ENCODE measurements at regions of chr22 and their contacts with region 1.

Region 1: DNA sequence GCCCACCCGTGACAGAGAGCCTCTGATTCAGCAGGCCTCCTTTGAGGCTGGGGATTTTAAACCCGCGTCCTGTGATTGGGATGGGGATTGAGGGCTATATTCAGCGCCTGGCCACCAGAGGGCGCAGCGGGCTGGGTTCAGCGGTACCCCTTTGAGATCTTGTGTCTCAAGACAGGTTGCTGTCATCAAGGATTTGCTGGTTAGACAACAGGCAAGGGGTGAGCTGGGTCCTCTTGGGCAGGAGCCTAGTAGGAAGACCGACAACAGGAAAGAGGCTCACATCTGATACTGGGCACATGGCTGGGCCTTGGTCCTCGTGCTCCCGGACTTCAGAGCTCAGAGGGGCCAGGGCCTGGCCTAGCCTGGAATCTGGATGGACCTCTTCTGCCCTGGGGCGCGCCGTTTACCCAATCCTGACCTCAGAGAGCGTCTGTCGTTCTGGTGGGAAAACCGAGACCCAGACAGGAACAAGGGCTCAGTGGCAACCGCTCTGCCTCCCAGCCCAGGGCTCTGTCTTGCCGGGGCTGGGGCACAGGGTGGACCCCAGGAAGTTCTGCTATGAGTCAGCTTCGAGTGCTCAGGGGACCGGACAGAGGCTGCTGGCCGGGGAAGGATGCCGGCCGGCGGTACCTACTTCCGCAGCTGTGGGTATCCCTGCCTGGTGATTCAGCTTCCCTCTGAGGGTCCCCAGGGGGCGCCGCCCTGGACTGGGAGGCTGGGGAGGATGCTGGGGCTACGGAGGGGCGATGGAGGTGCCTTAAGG is 929 bp upstream of the SLC35E4 start:
- DNase-seq: peak; percentile 97
- H3K4me3 Mint-ChIP-seq: peak overlapping the region; percentile 79
- H3K27ac Mint-ChIP-seq: peak overlapping the region; percentile 94
- H3K4me1 Mint-ChIP-seq: peaks cover 27% of the 10 kb centered on the region
- H3K27me3 Mint-ChIP-seq: no peaks in the 10 kb centered on the region

Region 2: DNA sequence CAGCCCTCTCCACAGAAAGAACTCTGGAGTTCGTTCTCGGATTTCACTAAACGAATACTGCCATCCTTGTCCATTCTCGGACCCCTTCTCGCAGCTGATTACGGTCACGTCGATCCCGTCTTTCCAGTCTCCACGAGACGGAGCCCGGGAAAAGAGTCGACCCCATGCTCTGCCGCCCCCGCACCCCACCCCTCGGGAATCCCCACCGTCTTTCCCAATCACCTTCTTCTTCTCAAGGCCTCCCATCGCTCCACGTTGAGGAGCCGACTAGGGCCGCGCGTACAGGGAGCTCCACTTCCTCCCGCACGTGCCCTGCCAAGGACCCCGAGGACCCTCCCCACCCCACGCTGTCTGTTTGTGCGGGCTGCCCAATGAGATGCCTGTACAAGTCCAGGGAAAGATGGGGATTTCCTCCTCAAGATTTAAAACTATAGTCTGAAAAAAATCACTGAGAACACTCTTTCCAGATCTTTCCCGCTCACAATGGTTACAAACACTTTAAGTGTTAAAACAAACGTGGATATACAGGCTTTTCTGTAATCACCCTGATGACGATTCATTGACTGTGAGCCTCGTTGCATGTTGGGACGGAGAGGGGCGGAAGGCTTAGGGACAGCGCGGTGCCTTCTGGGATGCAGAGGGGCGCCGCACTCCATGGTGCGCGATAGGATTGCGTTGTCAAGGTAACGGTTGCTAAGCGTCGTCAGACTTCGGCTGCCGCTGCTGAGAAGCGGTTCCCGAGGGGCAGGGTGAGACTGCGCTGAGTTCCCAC is 42.9 kb before region 1 on chr22 and contains the start of gene PES1:
- intact Hi-C with region 1: loop called (anchors 1 kb)
- DNase-seq: peak; percentile 98
- H3K4me3 Mint-ChIP-seq: no peak within 1 kb of the TSS
- H3K27ac Mint-ChIP-seq: no peak within 1 kb of the TSS
- H3K4me1 Mint-ChIP-seq: no peaks in the 10 kb centered on the region
- H3K27me3 Mint-ChIP-seq: peaks cover 14% of the 10 kb centered on the region
- total RNA-seq, gene PES1: 170 and 173 TPM in 2 replicates

Region 3: GRCh38 chr22:30649430-30650007 is 14.9 kb after region 1 on chr22:
- intact Hi-C with region 1: loop called (anchors 1 kb)
- DNase-seq: peak; percentile 91
- H3K4me3 Mint-ChIP-seq: peak overlapping the region; percentile 40
- H3K27ac Mint-ChIP-seq: peak overlapping the region; percentile 92
- H3K4me1 Mint-ChIP-seq: peaks cover 38% of the 10 kb centered on the region
- H3K27me3 Mint-ChIP-seq: no peaks in the 10 kb centered on the region

Region 4: GRCh38 chr22:30694171-30694639 is 59.6 kb after region 1 on chr22:
- intact Hi-C with region 1: loop called (anchors 10 kb)
- DNase-seq: peak; percentile 85
- H3K4me3 Mint-ChIP-seq: peak overlapping the region; percentile 85
- H3K27ac Mint-ChIP-seq: peak overlapping the region; percentile 71
- H3K4me1 Mint-ChIP-seq: peaks cover 12% of the 10 kb centered on the region
- H3K27me3 Mint-ChIP-seq: peaks cover 24% of the 10 kb centered on the region

Region 5: DNA sequence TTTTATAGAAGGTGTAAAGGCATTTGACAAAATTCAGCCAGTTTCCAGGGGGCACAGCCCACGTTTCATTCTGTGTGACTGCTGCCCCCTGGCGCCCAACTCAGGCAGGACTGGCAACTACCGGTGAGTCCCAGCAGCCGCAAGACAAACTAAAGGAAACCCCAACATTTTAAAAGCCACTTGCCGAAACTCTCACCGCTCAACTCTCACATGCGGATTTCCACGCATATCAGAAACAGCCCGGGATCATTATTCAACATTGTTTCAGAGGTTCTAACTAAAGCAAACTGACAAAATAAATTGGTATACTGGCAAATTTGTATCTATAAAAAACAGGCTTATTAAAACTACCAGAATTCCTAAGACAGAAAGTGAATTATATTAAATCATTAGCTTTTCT is 285.8 kb after region 1 on chr22:
- intact Hi-C with region 1: loop called (anchors 1 kb)
- DNase-seq: peak; percentile 95
- H3K4me3 Mint-ChIP-seq: peak overlapping the region; percentile 68
- H3K27ac Mint-ChIP-seq: no peak overlapping the region
- H3K4me1 Mint-ChIP-seq: peaks cover 10% of the 10 kb centered on the region
- H3K27me3 Mint-ChIP-seq: no peaks in the 10 kb centered on the region

Measured in activated CD4-positive, alpha-beta T cell treated with anti-CD3 and anti-CD28 coated beads, Interleukin-2, amount 10 ng/mL, durations not matched to agents 24 days and 14 days (primary cell).